ENCODE measurements at regions of chrX and their contacts with region 1.

Region 1: GRCh38 chrX:150993796-150994195 is 10.7 kb downstream of the HMGB3 start:
- DNase-seq: no peak
- ATAC-seq: no peak
- H3K4me3 ChIP-seq: no peak overlapping the region
- H3K27ac ChIP-seq: no peak overlapping the region
- H3K4me1 ChIP-seq: no peaks in the 10 kb centered on the region
- H3K27me3 ChIP-seq: no peaks in the 10 kb centered on the region
- CTCF ChIP-seq: no peak

Region 2: DNA sequence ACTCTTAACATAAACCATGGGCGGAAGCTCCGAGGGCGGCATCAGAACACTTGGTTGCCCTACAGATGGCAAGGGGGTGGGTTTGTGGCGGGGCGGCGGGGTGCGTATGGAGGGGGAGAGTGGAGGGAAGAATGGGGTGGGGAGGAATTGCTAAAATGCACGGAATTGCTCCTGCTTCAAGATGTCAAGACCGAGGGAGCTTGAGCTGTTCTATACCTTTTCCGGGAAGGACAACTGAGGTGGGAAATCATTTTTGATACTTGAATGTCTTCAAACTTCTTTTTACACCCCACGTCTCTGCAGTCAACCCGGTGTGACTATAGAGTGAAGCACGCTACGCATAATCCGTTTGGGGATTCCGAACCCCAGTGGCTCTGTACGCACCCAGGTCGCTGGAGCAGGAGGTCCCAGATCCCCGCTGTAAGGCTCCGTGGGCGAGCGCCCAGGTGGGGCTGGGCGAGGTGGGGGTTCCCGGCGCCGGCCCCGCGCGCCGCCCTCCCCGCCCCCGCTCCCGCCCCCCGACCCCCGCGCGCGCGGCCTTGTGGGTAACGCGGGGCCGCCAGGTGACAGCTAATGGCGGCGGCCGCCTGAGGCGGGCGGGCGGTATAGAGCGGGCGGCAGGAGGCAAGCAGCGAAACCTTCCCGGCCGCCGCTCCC is 300.8 kb before region 1 on chrX and contains the start of gene MTMR1:
- CTCF ChIA-PET with region 1: no interaction called
- POLR2A ChIA-PET with region 1: no interaction called
- intact Hi-C with region 1: no loop called
- DNase-seq: peak; percentile 30
- ATAC-seq: peak; percentile 16
- H3K4me3 ChIP-seq: peak within 1 kb of the TSS; percentile 88
- H3K27ac ChIP-seq: peak within 1 kb of the TSS; percentile 93
- H3K4me1 ChIP-seq: peaks cover 47% of the 10 kb centered on the region
- H3K27me3 ChIP-seq: no peaks in the 10 kb centered on the region
- CTCF ChIP-seq: no peak
- total RNA-seq, gene MTMR1: 31.8 and 39.0 TPM in 2 replicates

Region 3: GRCh38 chrX:150712619-150713018 is 281.2 kb before region 1 on chrX:
- CTCF ChIA-PET with region 1: no interaction called
- POLR2A ChIA-PET with region 1: no interaction called
- intact Hi-C with region 1: no loop called
- DNase-seq: no peak
- ATAC-seq: no peak
- H3K4me3 ChIP-seq: no peak overlapping the region
- H3K27ac ChIP-seq: no peak overlapping the region
- H3K4me1 ChIP-seq: peaks cover 10% of the 10 kb centered on the region; the same call in 1 of the 2 replicates
- H3K27me3 ChIP-seq: no peaks in the 10 kb centered on the region
- CTCF ChIP-seq: no peak

Region 4: DNA sequence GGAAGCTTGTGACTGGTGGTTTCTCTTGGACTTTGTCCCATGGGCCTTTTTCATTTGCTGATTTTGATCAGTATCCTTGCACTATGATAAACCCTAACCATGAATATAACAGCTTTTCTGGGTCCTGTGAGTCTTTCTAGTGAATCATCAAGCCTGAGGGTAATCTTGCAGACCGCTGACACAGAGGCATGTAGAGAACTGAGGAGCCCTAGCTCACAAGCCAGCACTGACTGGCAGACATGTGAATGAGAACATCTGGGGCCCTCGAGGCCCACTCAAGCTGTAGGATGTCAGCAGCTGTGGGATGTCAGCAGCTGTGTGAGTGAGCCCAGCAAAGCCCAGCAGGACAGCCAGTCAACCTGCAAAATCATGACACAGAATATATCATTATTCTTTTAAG is 26.1 kb after region 1 on chrX:
- CTCF ChIA-PET with region 1: no interaction called
- POLR2A ChIA-PET with region 1: no interaction called
- intact Hi-C with region 1: loop called (anchors 2 kb)
- DNase-seq: peak; percentile 13
- ATAC-seq: no peak
- H3K4me3 ChIP-seq: no peak overlapping the region
- H3K27ac ChIP-seq: no peak overlapping the region
- H3K4me1 ChIP-seq: no peaks in the 10 kb centered on the region
- H3K27me3 ChIP-seq: no peaks in the 10 kb centered on the region; the same call in 1 of the 2 replicates
- CTCF ChIP-seq: no peak

Measured in PC-3 (cell line).